PC-9 (cell line): ENCODE measurements at regions of chr1 and their contacts with region 1.

Region 1: GRCh38 chr1:109193653-109194590 is 19.8 kb upstream of the SARS1 start:
- DNase-seq: peak in 1 of 2 experiments; percentile 61
- H3K4me3 ChIP-seq: no peak overlapping the region
- H3K27ac ChIP-seq: no peak overlapping the region
- H3K4me1 ChIP-seq: peaks cover 24% of the 10 kb centered on the region
- H3K27me3 ChIP-seq: no peaks in the 10 kb centered on the region
- CTCF ChIP-seq: peak; percentile 93

Region 2: GRCh38 chr1:108830119-108831008 is 363.6 kb before region 1 on chr1:
- CTCF ChIA-PET with region 1: no interaction called
- POLR2A ChIA-PET with region 1: no interaction called
- intact Hi-C with region 1: no loop called
- DNase-seq: peak; percentile 79 to 97
- H3K4me3 ChIP-seq: peak overlapping the region; percentile 37
- H3K27ac ChIP-seq: peak overlapping the region; percentile 79
- H3K4me1 ChIP-seq: peaks cover 41% of the 10 kb centered on the region
- H3K27me3 ChIP-seq: no peaks in the 10 kb centered on the region
- CTCF ChIP-seq: no peak

Region 3: GRCh38 chr1:109213785-109214468 is 20.0 kb after region 1 on chr1 and contains the start of gene SARS1:
- CTCF ChIA-PET with region 1: interaction called, 4 read pairs
- POLR2A ChIA-PET with region 1: no interaction called
- intact Hi-C with region 1: loop called (anchors 2 kb)
- DNase-seq: peak; percentile 74 to 92
- H3K4me3 ChIP-seq: peak within 1 kb of the TSS; percentile 87
- H3K27ac ChIP-seq: peak within 1 kb of the TSS; percentile 91
- H3K4me1 ChIP-seq: peaks cover 32% of the 10 kb centered on the region
- H3K27me3 ChIP-seq: no peaks in the 10 kb centered on the region
- CTCF ChIP-seq: no peak
- total RNA-seq, gene SARS1: 206 and 279 TPM in 2 replicates

Region 4: DNA sequence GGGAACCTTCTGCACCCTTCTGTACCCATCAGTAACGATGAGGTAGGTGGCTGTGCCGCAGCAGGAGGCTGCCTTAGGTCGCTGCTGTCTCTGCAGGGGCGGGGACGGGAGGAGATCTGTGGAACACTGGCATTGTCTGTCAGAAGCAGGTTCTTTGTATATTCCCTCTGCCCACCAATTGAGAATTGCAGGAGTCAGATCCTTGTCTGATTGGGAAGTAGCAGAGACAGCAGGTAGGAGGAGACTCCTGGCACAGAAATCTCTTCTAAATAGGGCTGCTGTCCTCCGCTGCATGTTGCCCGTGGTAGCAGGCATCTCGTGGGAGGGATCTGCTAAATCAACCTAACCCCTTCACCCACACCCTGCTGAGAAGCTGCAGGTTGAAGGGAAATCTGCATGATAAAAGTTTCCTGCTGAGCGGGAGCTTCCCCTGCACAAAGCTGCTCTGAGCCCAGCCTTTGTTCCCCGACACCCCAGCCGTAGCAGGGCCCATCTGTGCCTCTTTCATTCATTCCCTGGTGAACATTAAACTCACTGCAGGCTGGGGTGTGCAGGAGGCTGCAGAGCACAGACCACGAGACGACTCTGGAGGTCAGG is 35.7 kb after region 1 on chr1:
- CTCF ChIA-PET with region 1: interaction called, 14 read pairs
- POLR2A ChIA-PET with region 1: no interaction called
- intact Hi-C with region 1: loop called (anchors 1 kb)
- DNase-seq: no peak
- H3K4me3 ChIP-seq: no peak overlapping the region
- H3K27ac ChIP-seq: no peak overlapping the region
- H3K4me1 ChIP-seq: peaks cover 43% of the 10 kb centered on the region
- H3K27me3 ChIP-seq: no peaks in the 10 kb centered on the region
- CTCF ChIP-seq: no peak

Region 5: GRCh38 chr1:109370712-109371455 is 177.0 kb after region 1 on chr1:
- CTCF ChIA-PET with region 1: no interaction called
- POLR2A ChIA-PET with region 1: no interaction called
- intact Hi-C with region 1: no loop called
- DNase-seq: peak; percentile 2 to 82
- H3K4me3 ChIP-seq: no peak overlapping the region
- H3K27ac ChIP-seq: peak overlapping the region; percentile 45
- H3K4me1 ChIP-seq: peaks cover 22% of the 10 kb centered on the region
- H3K27me3 ChIP-seq: no peaks in the 10 kb centered on the region
- CTCF ChIP-seq: no peak